CD8-positive, alpha-beta T cell (primary cell): ENCODE measurements at regions of chr5 and their contacts with region 1.

Region 1: DNA sequence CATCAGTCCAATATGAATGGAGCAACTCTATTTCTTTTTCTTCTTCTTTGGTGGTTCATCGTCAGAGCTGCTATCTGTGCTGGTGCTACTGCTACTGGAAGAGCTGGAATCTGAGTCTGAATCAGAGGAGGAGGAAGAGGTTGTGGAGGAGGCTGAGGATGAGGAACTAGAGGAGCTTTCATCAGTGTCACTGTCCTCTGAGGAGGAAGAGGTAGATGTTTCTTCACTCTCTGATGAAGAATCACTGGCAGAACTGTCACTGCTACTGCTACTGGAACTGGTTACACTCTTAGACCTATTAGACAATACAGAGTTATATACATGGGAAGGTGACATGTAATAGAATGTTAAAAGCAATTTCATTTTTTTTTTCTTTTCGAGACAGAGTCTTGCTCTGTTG is 27.8 kb downstream of the ZCCHC10 start:
- DNase-seq: no peak
- ATAC-seq: no peak
- H3K4me3 ChIP-seq: no peak overlapping the region
- H3K4me3 Mint-ChIP-seq: no peak overlapping the region
- H3K27ac ChIP-seq: no peak overlapping the region
- H3K27ac Mint-ChIP-seq: peak overlapping the region; percentile 47
- H3K4me1 ChIP-seq: no peaks in the 10 kb centered on the region
- H3K4me1 Mint-ChIP-seq: no peaks in the 10 kb centered on the region
- H3K27me3 ChIP-seq: no peaks in the 10 kb centered on the region
- H3K27me3 Mint-ChIP-seq: no peaks in the 10 kb centered on the region
- CTCF ChIP-seq: no peak

Region 2: DNA sequence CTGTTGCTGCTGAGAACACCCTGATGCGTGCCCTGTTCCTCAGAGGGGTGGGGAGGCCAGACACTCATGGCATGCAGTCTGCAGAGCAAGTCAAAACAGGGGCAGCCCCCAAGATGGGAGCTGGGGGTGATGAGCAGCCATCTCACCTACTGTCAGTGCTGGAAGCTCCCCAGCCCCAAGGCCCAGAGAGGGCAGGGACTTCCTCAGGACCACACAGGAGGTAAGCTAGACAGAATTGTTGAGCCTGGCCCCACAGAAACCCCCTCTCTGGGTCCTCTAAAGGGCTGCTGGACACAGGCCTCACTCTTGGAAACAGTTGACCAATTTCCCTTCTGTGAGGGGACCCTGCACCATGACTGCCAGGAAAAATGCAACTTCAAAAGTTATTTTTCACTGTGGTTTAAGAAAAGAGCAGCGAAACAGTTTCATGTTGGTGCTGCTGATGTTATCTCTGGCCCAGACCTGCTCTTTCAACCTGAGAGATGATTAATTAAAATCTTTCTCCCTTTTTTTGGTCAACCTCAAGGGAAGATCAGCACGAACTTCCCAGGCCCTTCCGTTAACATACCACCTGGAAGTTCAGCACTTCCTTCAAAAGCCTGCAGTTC is 915.4 kb before region 1 on chr5:
- CTCF ChIA-PET with region 1: no interaction called
- POLR2A ChIA-PET with region 1: no interaction called
- intact Hi-C with region 1: loop called in 1 of 2 experiments (anchors 5 kb)
- DNase-seq: no peak
- ATAC-seq: no peak
- H3K4me3 ChIP-seq: no peak overlapping the region
- H3K4me3 Mint-ChIP-seq: no peak overlapping the region
- H3K27ac ChIP-seq: no peak overlapping the region
- H3K27ac Mint-ChIP-seq: no peak overlapping the region
- H3K4me1 ChIP-seq: peaks cover 7% of the 10 kb centered on the region
- H3K4me1 Mint-ChIP-seq: peaks cover 13% of the 10 kb centered on the region
- H3K27me3 ChIP-seq: no peaks in the 10 kb centered on the region
- H3K27me3 Mint-ChIP-seq: no peaks in the 10 kb centered on the region
- CTCF ChIP-seq: no peak

Region 3: DNA sequence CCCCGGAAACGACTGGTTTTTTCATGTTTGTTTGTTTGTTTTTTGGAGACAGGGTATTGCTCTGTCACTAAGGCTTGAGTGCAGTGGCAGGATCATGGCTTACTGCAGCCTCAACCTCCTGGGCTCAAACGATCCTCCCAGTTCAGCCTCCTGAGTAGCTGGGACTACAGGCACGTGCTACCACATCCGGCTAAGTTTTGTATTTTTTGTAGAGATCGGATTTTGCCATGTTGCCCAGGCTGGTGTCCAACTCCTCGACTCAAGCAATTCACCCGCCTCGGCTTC is 10.5 kb before region 1 on chr5:
- CTCF ChIA-PET with region 1: no interaction called
- POLR2A ChIA-PET with region 1: no interaction called
- intact Hi-C with region 1: no loop called
- DNase-seq: no peak
- ATAC-seq: no peak
- H3K4me3 ChIP-seq: no peak overlapping the region
- H3K4me3 Mint-ChIP-seq: no peak overlapping the region
- H3K27ac ChIP-seq: no peak overlapping the region
- H3K27ac Mint-ChIP-seq: no peak overlapping the region
- H3K4me1 ChIP-seq: no peaks in the 10 kb centered on the region
- H3K4me1 Mint-ChIP-seq: no peaks in the 10 kb centered on the region
- H3K27me3 ChIP-seq: no peaks in the 10 kb centered on the region
- H3K27me3 Mint-ChIP-seq: peaks cover 4% of the 10 kb centered on the region
- CTCF ChIP-seq: no peak